ENCODE measurements at regions of chr16 and their contacts with region 1.

Region 1: DNA sequence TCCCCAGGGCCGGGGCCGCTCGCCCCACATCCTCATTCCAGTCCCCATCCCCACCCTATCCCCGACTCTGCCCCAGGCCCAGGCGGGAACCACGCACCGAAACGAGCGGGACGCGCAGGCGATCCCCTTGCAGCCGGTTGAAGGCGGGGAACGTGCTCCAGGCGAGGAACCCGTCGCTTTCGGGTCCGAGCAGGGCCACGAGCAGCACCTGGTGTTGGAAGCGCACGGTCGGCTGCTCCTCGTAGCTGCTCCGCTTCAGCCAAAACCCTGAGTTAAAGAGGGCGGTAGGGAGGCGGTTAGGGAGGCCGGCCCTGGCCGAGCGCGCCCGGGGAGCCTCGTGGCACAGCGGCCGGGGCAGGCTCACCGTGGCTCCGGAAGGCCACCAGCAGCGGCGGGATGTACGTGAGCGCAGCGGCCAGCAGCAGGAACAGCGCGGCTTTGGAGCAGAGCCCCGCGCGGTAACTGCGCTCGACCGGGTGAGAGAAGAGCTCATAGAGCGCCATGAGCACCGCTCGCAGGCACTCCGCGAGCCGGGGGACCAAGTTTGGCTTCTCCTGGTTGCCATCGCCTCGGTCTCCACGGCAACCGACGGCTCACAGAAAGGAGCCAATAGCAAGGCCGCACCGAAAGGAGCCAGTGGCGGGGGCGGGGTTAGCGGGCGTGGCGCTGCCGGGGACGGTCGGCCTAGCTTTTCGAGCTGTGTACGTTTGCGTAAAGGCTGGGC is at the start of gene TMEM231:
- DNase-seq: peak; percentile 90 to 97
- ATAC-seq: peak; percentile 96 to 97 (median 97)
- H3K4me3 ChIP-seq: peak within 1 kb of the TSS; percentile 43
- H3K4me3 Mint-ChIP-seq: peak within 1 kb of the TSS; percentile 93
- H3K27ac ChIP-seq: peak within 1 kb of the TSS; percentile 73
- H3K27ac Mint-ChIP-seq: peak within 1 kb of the TSS; percentile 77 to 94
- H3K4me1 ChIP-seq: peaks cover 15% of the 10 kb centered on the region
- H3K4me1 Mint-ChIP-seq: peaks cover 11% of the 10 kb centered on the region in 2 donors
- H3K27me3 ChIP-seq: no peaks in the 10 kb centered on the region
- H3K27me3 Mint-ChIP-seq: peaks cover 9 to 17% of the 10 kb centered on the region in 2 donors
- CTCF ChIP-seq: no peak
- total RNA-seq, gene TMEM231: 2.1 to 2.7 (median 2.4) TPM

Region 2: DNA sequence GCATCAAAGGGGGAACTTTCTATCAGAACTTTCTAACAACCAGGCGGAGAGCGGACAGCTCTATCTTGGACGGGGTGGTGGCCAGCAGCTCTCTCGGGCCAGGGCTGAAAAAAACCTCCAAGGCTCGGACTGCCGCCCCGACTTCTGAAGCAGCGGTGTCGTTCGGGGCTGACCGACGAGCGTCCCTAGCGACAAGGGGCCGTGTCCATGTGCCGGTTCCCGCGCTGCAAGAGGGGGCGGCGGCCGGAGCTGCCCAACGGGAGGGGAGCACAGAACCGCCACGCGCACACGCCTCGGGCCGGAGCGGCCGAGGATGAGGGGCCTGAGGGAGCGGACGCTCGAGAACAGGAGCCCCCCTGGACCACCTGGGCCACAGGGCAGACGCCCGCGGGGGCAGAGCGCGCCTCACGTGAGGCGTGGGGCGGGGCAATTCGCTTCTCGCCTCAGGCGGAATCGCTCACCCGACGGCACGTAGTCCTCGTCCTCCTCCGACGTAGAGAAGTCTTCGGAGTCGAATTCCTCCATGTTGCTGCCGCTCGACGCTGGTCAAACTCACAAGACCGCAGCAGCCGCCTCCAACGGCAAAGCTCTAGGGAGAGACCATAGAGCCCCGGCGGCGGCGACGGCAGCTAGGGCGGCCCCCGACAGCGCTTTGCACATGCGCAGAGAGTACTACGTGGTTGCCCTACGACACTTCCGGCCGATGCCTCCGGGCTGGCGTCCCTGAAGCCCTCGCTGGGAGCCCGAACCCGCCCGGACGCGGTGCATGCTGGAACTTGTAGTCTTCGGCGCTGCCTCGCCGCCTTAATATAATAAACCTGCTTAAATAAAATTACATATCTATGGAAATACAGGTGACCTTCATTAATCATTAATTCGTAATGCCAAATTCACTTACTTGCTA is 122.8 kb before region 1 on chr16 and contains the start of gene CFDP1:
- intact Hi-C with region 1: loop called (anchors 2 kb)
- DNase-seq: peak; percentile 93 to 98
- ATAC-seq: peak; percentile 83 to 93 (median 87)
- H3K4me3 ChIP-seq: peak within 1 kb of the TSS; percentile 86
- H3K4me3 Mint-ChIP-seq: peak within 1 kb of the TSS; percentile 96
- H3K27ac ChIP-seq: peak within 1 kb of the TSS; percentile 94
- H3K27ac Mint-ChIP-seq: peak within 1 kb of the TSS; percentile 96 to 99
- H3K4me1 ChIP-seq: peaks cover 19% of the 10 kb centered on the region
- H3K4me1 Mint-ChIP-seq: peaks cover 22 to 26% of the 10 kb centered on the region in 2 donors
- H3K27me3 ChIP-seq: no peaks in the 10 kb centered on the region
- H3K27me3 Mint-ChIP-seq: no peaks in the 10 kb centered on the region
- CTCF ChIP-seq: no peak
- total RNA-seq, gene CFDP1: 32.2 to 38.8 (median 32.3) TPM

Region 3: DNA sequence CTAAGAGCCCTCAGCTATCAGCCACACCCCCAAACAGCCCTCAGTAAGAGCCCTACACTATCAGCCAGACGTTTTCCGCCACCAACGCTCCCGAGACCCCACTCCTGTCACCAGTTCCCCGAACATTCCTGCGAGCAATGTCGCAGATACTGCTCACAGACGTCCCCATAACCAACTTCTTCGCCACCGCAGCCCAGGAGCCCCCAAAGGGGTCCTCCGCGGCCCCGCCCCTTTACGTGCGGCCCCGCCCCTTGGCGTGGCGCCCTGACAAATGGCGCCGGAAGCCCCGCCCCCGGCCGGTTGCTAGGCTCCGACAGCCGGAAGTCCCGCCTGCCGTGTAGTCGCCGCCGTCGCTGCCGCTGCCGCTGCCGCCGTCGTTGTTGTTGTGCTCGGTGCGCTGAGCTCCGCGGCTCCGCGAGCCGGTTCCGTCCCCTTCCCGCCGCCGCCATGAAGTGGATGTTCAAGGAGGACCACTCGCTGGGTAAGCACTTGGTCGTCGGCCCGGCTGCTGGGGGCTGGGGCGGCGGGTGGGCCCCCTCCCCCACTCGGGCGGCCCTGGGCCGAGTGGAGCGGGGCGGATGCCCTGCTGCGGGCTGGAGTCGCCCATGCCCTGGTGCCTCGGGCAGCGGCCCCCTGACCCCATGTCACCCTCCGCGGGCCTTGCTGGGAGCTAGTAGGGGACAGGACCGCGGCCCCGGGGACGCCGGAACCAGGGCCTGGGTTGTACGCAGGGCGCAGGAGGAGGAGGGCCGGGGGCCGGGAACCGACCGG is 10.4 kb after region 1 on chr16 and contains the start of gene GABARAPL2:
- intact Hi-C with region 1: loop called (anchors 1 kb)
- DNase-seq: peak; percentile 94 to 95
- ATAC-seq: peak; percentile 78 to 93 (median 85)
- H3K4me3 ChIP-seq: peak within 1 kb of the TSS; percentile 59
- H3K4me3 Mint-ChIP-seq: peak within 1 kb of the TSS; percentile 90
- H3K27ac ChIP-seq: peak within 1 kb of the TSS; percentile 76
- H3K27ac Mint-ChIP-seq: peak within 1 kb of the TSS; percentile 86 to 93
- H3K4me1 ChIP-seq: peaks cover 30% of the 10 kb centered on the region
- H3K4me1 Mint-ChIP-seq: peaks cover 20 to 26% of the 10 kb centered on the region in 2 donors
- H3K27me3 ChIP-seq: peaks cover 2% of the 10 kb centered on the region
- H3K27me3 Mint-ChIP-seq: peaks cover 16 to 19% of the 10 kb centered on the region in 2 donors
- CTCF ChIP-seq: no peak
- total RNA-seq, gene GABARAPL2: 66.2 to 74.0 (median 71.3) TPM